ENCODE measurements at regions of chr11 and their contacts with region 1.

Region 1: DNA sequence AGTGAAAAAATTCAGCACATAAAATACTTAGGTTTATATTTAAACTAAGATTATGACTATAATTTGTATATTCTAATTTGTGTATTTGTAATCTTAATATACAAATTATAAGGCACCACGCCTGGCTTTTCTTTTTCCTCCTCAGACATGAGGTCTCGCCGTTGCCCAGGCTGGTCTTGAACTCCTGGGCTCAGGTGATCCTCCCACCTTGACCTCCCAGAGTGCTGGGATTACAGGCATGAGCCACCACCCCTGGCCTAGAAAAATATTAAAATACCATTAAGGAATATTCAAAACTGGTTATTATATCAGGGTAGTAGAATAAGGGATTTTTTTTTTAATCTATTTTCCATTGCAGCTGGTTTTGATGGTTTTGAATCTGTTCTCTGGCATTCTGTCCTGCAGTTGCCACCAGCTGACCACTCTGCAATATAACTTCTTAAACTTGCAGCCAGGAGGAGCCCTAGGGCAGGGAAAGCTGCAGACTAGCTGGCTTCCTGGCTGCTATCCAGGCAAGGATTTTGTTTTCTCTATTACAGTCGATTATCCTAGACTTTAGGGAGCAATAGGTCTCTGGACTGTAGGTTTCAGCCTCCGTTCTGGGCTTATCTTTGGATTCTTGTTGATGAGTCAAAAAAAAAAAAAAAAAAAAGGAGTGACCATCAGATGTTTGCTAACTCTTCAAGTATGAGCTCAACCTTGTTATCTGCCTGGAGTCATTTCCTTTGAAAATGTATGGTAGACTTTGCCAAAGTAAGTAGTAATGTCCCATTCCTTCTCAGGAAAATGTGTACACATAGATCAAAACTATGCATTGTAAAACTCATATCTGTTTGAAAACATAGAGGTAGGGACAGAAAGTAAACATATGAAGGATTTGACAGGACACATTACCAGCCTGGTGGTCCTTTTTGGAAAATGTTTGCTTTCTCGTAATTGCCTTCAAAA is 13.2 kb downstream of the POLA2 start:
- DNase-seq: peak in 2 of 3 donors; percentile 58 to 91
- ATAC-seq: peak; percentile 88
- H3K4me3 ChIP-seq: no peak overlapping the region
- H3K4me1 ChIP-seq: peaks cover 18% of the 10 kb centered on the region
- CTCF ChIP-seq: peak; percentile 49

Region 2: GRCh38 chr11:65314501-65315203 is 39.6 kb after region 1 on chr11 and contains the start of gene CDC42EP2:
- intact Hi-C with region 1: loop called in 1 of 2 experiments (anchors 2 kb)
- DNase-seq: peak; percentile 90 to 96 (median 91)
- ATAC-seq: peak; percentile 90
- H3K4me3 ChIP-seq: peak within 1 kb of the TSS; percentile 81
- H3K4me1 ChIP-seq: peaks cover 23% of the 10 kb centered on the region
- CTCF ChIP-seq: no peak
- total RNA-seq, gene CDC42EP2: 7.0 to 27.4 (median 11.6) TPM

Region 3: GRCh38 chr11:65321828-65322485 is 46.9 kb after region 1 on chr11:
- intact Hi-C with region 1: loop called in 1 of 2 experiments (anchors 5 kb)
- DNase-seq: no peak
- ATAC-seq: no peak
- H3K4me3 ChIP-seq: no peak overlapping the region
- H3K4me1 ChIP-seq: no peaks in the 10 kb centered on the region
- CTCF ChIP-seq: no peak

Region 4: DNA sequence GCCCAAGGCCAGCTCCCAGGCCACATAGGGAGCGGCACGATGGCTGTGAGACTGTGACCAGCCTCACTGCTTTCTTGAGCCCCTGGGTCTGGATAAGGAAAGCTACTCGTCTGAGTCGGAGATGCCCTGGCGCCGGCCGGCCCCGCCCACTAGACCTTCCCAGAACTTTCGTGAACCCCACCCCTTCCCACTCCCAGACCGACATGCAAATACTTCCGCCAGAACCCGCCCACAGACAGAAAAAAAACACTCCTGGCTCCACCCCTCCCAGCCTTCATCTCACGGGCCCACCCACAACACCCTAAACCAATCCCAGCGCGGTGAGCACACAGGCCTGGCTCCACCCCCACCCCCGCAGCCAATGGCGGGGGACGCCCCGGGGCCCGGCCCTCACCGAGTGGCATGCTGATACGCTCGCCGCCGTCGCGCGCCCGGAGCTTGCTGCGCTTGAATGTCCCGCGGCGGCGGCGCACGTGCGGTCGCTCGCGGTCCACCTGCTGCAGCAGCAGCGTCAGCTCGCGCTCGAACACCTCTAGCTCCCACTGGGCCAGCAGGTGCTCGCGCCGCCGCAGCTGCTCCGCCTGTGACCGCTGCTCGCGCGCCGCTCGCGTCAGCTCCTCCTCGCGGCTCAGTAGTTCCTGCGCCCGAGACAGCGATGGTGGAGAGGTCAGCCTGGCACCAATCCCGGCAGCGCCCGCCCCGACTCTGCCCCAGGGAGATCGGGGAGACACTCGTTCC is 332.0 kb after region 1 on chr11:
- intact Hi-C with region 1: no loop called
- DNase-seq: peak; percentile 89 to 92 (median 89)
- ATAC-seq: peak; percentile 92
- H3K4me3 ChIP-seq: no peak overlapping the region
- H3K4me1 ChIP-seq: peaks cover 13% of the 10 kb centered on the region
- CTCF ChIP-seq: no peak